ENCODE measurements at regions of chr12 and their contacts with region 1.

Region 1: GRCh38 chr12:47941851-47942601 is 21.4 kb upstream of the TMEM106C start:
- DNase-seq: peak; percentile 38 to 93
- H3K4me3 ChIP-seq: peak overlapping the region in 3 of 4 experiments; percentile 8 to 49 (median 14); a peak in 4 of 8 replicates
- H3K27ac ChIP-seq: no peak overlapping the region
- H3K4me1 ChIP-seq: peaks cover 0 to 16% (median 13%) of the 10 kb centered on the region in 4 experiments; a peak in 5 of 7 replicates
- H3K27me3 ChIP-seq: peaks cover 0 to 24% (median 16%) of the 10 kb centered on the region in 4 experiments; a peak in 5 of 7 replicates
- CTCF ChIP-seq: peak in 2 of 3 experiments; percentile 66 to 76; a peak in 3 of 4 replicates
- EP300 ChIP-seq: no peak
- POLR2A ChIP-seq: no peak
- RAD21 ChIP-seq: peak; percentile 71 to 76

Region 2: DNA sequence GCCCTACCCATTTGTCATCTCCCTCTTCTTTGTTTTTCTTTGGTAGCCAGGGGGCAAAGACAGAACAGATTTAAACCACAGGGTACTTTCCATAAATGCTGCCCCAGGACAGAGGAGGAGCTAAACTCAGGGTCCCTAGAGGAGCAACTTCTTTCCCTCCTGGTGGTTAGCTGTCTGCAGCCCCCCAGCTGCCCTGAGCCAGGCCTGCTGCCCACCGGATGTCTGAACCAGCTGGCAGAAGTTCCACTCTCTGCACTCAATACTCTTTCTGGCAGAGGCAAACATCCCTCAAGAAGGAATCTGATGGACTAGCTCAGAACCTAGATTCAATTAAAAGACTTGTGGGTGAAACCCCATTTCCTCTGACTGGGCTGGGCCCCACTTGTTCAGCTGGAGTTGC is 48.0 kb before region 1 on chr12:
- CTCF ChIA-PET with region 1: interaction called, 10 read pairs
- POLR2A ChIA-PET with region 1: no interaction called
- DNase-seq: no peak
- H3K4me3 ChIP-seq: no peak overlapping the region
- H3K27ac ChIP-seq: no peak overlapping the region
- H3K4me1 ChIP-seq: no peaks in the 10 kb centered on the region
- H3K27me3 ChIP-seq: peaks cover 0 to 6% (median 3%) of the 10 kb centered on the region in 4 experiments; a peak in 3 of 7 replicates
- CTCF ChIP-seq: no peak
- EP300 ChIP-seq: no peak
- POLR2A ChIP-seq: no peak
- RAD21 ChIP-seq: no peak

Region 3: DNA sequence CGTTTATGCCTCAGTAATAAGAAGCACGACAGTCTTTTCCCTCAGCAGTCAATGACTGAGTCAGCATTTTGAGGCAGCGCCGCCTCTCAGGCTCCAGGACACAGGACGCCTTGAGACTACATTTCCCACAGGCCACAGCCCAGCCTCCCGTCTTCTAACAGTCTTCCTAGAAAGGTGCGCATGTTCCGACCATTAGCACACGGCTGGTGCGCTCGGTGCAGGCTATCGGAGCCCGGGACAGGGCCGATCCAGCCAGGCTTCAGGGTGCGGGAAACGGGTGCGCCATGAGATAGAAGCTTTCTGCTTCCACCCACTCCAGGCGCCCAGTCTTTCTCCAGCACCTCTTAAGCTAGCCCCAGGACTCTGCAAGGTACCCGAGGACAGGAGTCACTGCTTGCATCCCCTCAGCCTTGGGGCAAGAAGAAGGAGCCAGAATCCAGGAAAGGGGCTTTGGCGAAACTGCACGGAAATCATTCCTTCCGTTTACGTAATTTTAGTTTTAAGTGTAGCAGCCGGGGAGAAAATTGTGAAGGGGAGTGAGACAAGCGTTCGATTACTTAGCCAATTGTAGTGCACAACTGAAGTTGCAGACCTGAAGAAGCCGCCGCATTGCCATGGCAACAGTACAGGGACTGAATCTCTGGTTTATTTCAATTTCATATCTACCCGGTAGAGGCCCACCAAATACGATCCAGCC is 354.7 kb after region 1 on chr12:
- CTCF ChIA-PET with region 1: no interaction called
- POLR2A ChIA-PET with region 1: no interaction called
- DNase-seq: peak; percentile 47 to 70
- H3K4me3 ChIP-seq: peak overlapping the region; percentile 36 to 63 (median 49)
- H3K27ac ChIP-seq: no peak overlapping the region
- H3K4me1 ChIP-seq: no peaks in the 10 kb centered on the region; a peak in 1 of 7 replicates
- H3K27me3 ChIP-seq: no peaks in the 10 kb centered on the region
- CTCF ChIP-seq: no peak
- EP300 ChIP-seq: no peak
- POLR2A ChIP-seq: peak in 1 of 2 experiments; percentile 32; a peak in 1 of 3 replicates
- RAD21 ChIP-seq: no peak